HepG2 (cell line): ENCODE measurements at regions of chr4 and their contacts with region 1.

Region 1: DNA sequence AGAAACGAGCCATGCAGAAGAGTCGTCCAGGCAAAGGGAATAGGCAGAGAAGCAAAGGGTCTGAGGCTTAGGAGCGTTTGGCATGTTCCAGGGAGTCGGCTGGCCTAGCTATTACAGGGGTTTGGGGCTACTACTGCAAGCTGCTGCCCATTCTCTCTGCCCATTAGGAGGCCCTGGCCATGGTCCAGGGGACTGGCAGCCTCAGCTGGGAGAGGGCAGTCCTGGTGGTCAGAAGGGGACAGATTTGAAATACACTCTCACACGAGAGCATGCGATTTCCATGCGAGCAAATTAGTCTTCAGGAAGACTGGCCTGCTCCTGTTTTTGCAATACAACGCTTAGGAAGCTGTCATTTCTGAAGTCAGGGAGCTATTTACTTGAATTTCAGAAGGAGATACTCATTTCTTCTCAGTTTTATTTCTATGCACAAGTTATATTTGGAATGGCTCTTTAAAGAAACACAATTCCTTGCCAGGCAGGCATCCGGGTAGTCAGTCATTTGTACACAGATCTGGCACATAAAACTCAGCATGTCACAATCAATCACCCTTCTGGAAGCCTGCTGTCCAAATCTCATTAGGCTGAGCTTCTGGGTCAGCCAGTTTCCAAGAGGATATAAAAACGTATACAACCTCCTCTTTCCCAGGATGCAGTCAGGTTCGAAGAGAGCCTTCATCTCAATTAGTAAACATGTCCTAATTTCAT is 27.0 kb downstream of the PROM1 start:
- DNase-seq: no peak
- ATAC-seq: no peak
- H3K4me3 ChIP-seq: no peak overlapping the region
- H3K27ac ChIP-seq: no peak overlapping the region
- H3K4me1 ChIP-seq: no peaks in the 10 kb centered on the region
- H3K27me3 ChIP-seq: no peaks in the 10 kb centered on the region; a peak in 2 of 5 replicates
- CTCF ChIP-seq: no peak
- EP300 ChIP-seq: no peak
- POLR2A ChIP-seq: no peak
- RAD21 ChIP-seq: no peak

Region 2: DNA sequence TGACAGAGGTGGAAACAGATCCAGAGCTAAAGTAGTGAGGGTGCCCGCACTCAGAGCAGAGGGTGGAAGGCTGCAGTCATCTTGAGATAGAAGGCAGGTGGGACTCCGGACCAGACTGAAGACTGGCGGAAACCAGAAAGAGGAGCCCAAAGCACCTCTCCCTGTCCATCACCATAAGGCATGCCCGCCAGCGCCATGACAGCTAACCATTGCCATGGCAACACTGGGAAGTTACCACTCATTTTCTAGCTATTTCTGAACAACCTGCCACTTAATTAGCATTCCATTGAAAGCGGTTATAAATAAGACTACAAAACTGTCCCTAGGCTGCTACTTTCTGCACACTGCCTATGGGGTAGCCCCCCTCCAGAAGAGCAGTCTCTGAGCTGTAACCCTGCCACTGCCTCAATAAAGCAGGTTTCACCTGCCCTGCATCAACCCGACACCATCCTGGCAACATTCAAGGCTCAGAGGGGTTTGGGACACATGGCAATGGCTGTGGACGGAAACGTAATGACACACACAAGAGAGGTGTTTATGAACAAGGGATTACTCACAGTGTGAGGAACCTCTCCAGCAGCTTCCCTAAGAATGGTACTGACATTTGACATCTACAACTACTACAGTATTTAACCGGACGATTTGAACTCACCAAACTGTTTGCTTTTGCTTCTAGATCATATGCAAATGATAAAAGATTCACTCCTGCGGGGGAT is 66.1 kb before region 1 on chr4:
- CTCF ChIA-PET with region 1: no interaction called
- POLR2A ChIA-PET with region 1: no interaction called
- in situ Hi-C with region 1: no loop called
- intact Hi-C with region 1: loop called (anchors 2 kb)
- DNase-seq: no peak
- ATAC-seq: no peak
- H3K4me3 ChIP-seq: no peak overlapping the region
- H3K27ac ChIP-seq: no peak overlapping the region
- H3K4me1 ChIP-seq: 0 out of 2 replicates have a peak, but pooled peaks cover 6% of the 10 kb centered on the region
- H3K27me3 ChIP-seq: no peaks in the 10 kb centered on the region
- CTCF ChIP-seq: no peak
- EP300 ChIP-seq: no peak
- POLR2A ChIP-seq: no peak
- RAD21 ChIP-seq: no peak

Region 3: DNA sequence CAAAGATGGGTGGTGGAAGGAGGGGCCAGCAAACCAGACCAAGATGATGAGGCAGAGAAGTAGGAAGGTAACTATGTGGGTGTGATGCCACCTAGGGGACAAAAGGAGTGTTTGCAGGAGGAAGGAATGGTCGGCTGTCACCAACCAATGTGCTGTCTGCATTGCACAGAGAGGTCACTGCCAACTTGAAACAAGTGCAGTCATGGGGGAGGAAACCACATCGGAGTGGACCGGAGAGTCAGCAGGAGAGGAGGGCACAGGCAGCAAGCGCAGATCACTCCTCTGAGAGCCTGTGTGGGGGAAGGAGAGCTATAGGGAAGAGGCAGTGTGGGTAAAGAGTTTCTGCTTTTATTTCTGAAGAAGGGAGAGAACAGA is 55.4 kb before region 1 on chr4:
- CTCF ChIA-PET with region 1: no interaction called
- POLR2A ChIA-PET with region 1: no interaction called
- in situ Hi-C with region 1: no loop called
- intact Hi-C with region 1: no loop called
- DNase-seq: peak; percentile 43
- ATAC-seq: peak; percentile 98
- H3K4me3 ChIP-seq: no peak overlapping the region
- H3K27ac ChIP-seq: no peak overlapping the region
- H3K4me1 ChIP-seq: no peaks in the 10 kb centered on the region
- H3K27me3 ChIP-seq: no peaks in the 10 kb centered on the region
- CTCF ChIP-seq: peak; percentile 92
- EP300 ChIP-seq: no peak
- POLR2A ChIP-seq: no peak
- RAD21 ChIP-seq: peak; percentile 64